AG04449 (cell line): ENCODE measurements at regions of chr11 and their contacts with region 1.

Region 1: DNA sequence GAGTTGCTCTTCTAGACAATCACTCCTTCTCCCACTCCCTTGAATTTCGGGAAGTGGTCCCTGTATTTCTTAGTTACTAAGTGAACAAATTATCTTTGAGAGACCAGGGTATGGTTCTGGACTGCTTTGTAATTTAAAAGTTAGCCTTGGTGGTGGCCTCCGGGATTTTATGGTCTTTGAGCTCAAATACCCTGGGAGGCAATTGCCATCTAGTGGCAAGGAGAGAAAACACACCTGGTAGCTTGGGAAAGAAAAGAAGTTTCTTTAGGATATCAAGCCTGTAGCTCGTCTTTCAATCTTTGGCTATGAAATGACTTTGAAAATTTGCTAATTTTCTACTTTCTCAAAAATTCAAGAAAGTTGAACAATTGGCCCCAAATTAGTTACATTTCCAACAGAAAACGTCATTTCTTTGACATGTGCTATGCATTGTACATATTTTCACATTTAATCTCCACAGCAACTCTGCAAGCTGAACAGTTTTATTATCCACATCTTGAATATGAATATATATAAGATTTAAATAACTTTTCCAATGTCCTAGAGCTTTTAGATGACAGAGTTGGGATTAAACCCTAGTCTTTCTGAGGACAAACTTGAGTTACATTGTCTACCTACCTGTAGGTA is 39.1 kb downstream of the MMP27 start:
- DNase-seq: no peak
- H3K4me3 ChIP-seq: no peak overlapping the region
- CTCF ChIP-seq: peak; percentile 63

Region 2: GRCh38 chr11:101726988-101727387 is 939.5 kb before region 1 on chr11:
- CTCF ChIA-PET with region 1: no interaction called
- POLR2A ChIA-PET with region 1: no interaction called
- DNase-seq: no peak
- H3K4me3 ChIP-seq: no peak overlapping the region
- CTCF ChIP-seq: no peak

Region 3: DNA sequence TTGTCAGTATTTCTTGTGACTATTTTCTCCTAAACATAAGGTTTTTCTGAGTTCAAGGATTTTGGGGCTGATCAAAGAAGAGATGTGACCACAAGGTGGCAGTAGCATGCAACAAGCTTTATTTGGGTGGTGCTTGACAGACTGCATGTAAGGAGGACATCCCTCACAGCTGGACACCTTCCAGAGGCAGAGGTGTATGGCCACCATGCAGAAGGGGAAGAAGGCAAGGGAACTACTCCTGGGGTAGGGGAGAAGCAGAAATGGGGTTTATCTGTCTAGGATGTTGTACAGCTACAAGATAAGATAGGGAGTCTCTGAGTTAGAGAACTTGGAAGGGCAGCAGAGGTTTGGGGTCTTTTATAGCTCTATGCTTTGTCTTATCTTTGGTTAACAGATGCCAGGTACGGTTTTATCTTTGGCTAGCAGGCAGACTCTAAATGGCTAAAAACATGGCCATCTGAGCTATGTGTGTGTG is 324.6 kb before region 1 on chr11:
- CTCF ChIA-PET with region 1: interaction called, 53 read pairs
- POLR2A ChIA-PET with region 1: interaction called, 3 read pairs
- DNase-seq: peak; percentile 53
- H3K4me3 ChIP-seq: no peak overlapping the region
- CTCF ChIP-seq: peak; percentile 77

Region 4: DNA sequence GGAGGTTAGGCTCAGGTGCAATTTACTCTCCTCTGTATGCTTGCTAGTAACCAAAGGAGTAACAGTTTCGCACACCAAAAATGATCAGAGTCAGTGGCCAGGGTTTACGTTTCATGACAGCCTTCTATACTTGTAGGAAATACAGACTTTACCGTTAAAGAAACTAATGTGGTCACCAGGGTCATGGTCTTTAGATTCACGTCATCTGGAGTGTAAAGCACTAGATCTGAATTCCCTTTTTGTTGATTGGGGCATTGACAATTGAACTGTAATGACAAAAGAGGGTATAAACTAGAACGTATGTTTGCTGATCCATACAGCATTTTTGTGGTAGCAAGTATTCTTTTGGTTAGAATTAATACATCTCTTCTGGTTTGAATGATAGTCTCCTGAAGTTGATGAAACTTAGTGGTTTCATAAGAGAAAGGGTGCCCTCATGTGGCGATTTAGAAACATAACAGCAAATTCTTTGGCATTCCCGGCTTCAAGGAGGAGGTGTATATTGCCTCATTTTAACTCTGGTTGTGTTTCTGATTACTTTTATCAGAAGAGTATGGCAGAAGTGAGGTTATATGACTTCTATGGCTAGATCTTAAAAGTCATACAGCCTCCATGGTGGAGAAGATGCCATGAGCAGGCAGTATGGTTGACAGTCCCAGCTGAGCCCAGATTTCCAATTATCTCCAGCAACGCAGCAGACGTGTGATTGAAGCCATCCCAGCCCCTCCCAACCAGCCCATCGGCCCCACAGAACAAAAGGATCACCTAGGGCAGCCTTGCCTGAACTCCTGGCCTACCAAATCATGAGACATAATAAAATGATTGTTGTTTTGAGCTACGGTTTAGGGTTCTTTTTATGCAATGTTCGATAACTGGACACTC is 171.0 kb before region 1 on chr11:
- CTCF ChIA-PET with region 1: interaction called, 25 read pairs
- POLR2A ChIA-PET with region 1: no interaction called
- DNase-seq: peak; percentile 67
- H3K4me3 ChIP-seq: no peak overlapping the region
- CTCF ChIP-seq: peak; percentile 46

Region 5: GRCh38 chr11:102539567-102539966 is 126.9 kb before region 1 on chr11:
- CTCF ChIA-PET with region 1: no interaction called
- POLR2A ChIA-PET with region 1: no interaction called
- DNase-seq: no peak
- H3K4me3 ChIP-seq: no peak overlapping the region
- CTCF ChIP-seq: no peak

Region 6: DNA sequence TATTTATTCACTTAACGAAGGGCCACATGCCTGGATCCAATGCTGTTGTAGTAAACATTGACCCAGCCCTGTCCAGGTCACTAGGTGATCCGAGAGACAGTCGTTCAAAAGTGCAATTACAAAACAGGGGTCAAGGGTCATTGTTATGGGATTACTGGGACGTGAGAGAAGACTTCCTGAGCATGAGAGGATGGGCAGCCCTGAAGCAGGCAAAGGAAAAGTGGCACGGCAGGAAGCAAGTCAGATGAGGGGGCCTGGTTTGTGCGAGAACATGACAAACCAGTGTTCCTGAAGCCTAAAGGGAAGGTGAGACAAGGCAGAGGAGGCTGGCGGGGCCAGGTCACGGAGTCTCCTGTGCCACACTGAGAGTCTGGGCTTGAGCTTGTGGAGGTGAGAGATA is 25.5 kb before region 1 on chr11:
- CTCF ChIA-PET with region 1: interaction called, 15 read pairs
- POLR2A ChIA-PET with region 1: no interaction called
- DNase-seq: no peak
- H3K4me3 ChIP-seq: no peak overlapping the region
- CTCF ChIP-seq: no peak

Region 7: DNA sequence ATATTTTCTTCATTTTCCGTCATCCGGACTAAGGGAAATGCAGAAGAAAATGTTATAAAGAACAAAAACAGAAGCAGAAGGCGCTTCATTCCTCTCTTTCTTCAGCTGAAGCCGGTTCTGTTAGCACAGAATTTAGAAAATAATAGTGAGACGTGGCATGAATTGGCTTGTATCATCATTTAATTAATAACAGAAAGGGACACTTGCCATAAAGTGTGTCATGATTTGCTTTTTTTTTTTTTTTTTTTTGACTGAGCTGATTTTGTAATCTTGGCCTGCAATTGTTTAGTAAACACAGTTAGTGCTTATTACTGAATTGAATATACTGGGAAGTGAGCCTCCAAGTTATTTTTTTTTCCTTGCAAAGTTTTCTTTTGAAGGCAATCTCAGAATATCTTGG is 39.2 kb after region 1 on chr11 and contains the start of gene MMP27:
- CTCF ChIA-PET with region 1: interaction called, 10 read pairs
- POLR2A ChIA-PET with region 1: no interaction called
- DNase-seq: no peak
- H3K4me3 ChIP-seq: no peak within 1 kb of the TSS
- CTCF ChIP-seq: no peak

Region 8: GRCh38 chr11:102724904-102725500 is 58.6 kb after region 1 on chr11 and contains the start of gene MMP8:
- CTCF ChIA-PET with region 1: no interaction called
- POLR2A ChIA-PET with region 1: no interaction called
- DNase-seq: peak; percentile 51
- H3K4me3 ChIP-seq: no peak within 1 kb of the TSS
- CTCF ChIP-seq: no peak